ENCODE measurements at regions of chr5 and their contacts with region 1.

Region 1: GRCh38 chr5:150409638-150410523 is 2.8 kb downstream of the CD74 start:
- DNase-seq: peak; percentile 96
- H3K4me3 Mint-ChIP-seq: no peak overlapping the region
- H3K27ac Mint-ChIP-seq: no peak overlapping the region
- H3K4me1 Mint-ChIP-seq: peaks cover 9% of the 10 kb centered on the region
- H3K27me3 Mint-ChIP-seq: no peaks in the 10 kb centered on the region
- CTCF ChIP-seq: no peak

Region 2: GRCh38 chr5:150180241-150181026 is 229.4 kb before region 1 on chr5:
- CTCF ChIA-PET with region 1: no interaction called
- POLR2A ChIA-PET with region 1: no interaction called
- intact Hi-C with region 1: no loop called
- DNase-seq: no peak
- H3K4me3 Mint-ChIP-seq: no peak overlapping the region
- H3K27ac Mint-ChIP-seq: peak overlapping the region; percentile 25
- H3K4me1 Mint-ChIP-seq: peaks cover 13% of the 10 kb centered on the region
- H3K27me3 Mint-ChIP-seq: no peaks in the 10 kb centered on the region
- CTCF ChIP-seq: no peak

Region 3: DNA sequence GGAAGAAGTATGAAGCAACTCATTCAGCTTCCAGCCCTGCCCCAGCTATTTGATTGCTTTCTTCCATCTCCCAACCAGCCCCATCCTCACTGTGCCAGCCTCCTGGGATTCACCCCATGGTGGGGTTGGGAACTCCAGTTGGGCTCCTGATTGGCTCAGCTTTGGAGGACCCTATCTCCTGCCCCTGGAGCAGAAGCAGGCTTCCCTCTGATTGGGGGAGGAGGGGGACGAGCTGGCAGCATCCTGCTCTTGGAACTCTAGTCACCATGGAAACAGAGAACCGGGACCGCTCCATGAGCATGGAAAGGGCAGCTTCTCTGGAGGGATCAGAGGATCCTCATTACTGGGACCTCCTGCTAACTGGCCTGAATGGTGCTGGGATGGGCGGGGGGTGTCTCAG is 217.4 kb before region 1 on chr5:
- CTCF ChIA-PET with region 1: no interaction called
- POLR2A ChIA-PET with region 1: no interaction called
- intact Hi-C with region 1: no loop called
- DNase-seq: no peak
- H3K4me3 Mint-ChIP-seq: no peak overlapping the region
- H3K27ac Mint-ChIP-seq: no peak overlapping the region
- H3K4me1 Mint-ChIP-seq: no peaks in the 10 kb centered on the region
- H3K27me3 Mint-ChIP-seq: peaks cover 37% of the 10 kb centered on the region
- CTCF ChIP-seq: no peak

Region 4: GRCh38 chr5:150398722-150399523 is 11.0 kb before region 1 on chr5:
- CTCF ChIA-PET with region 1: interaction called, 10 read pairs
- POLR2A ChIA-PET with region 1: interaction called, 3 read pairs
- intact Hi-C with region 1: no loop called
- DNase-seq: no peak
- H3K4me3 Mint-ChIP-seq: no peak overlapping the region
- H3K27ac Mint-ChIP-seq: no peak overlapping the region
- H3K4me1 Mint-ChIP-seq: no peaks in the 10 kb centered on the region
- H3K27me3 Mint-ChIP-seq: no peaks in the 10 kb centered on the region
- CTCF ChIP-seq: peak; percentile 30